ENCODE measurements at regions of chr1 and their contacts with region 1.

Region 1: DNA sequence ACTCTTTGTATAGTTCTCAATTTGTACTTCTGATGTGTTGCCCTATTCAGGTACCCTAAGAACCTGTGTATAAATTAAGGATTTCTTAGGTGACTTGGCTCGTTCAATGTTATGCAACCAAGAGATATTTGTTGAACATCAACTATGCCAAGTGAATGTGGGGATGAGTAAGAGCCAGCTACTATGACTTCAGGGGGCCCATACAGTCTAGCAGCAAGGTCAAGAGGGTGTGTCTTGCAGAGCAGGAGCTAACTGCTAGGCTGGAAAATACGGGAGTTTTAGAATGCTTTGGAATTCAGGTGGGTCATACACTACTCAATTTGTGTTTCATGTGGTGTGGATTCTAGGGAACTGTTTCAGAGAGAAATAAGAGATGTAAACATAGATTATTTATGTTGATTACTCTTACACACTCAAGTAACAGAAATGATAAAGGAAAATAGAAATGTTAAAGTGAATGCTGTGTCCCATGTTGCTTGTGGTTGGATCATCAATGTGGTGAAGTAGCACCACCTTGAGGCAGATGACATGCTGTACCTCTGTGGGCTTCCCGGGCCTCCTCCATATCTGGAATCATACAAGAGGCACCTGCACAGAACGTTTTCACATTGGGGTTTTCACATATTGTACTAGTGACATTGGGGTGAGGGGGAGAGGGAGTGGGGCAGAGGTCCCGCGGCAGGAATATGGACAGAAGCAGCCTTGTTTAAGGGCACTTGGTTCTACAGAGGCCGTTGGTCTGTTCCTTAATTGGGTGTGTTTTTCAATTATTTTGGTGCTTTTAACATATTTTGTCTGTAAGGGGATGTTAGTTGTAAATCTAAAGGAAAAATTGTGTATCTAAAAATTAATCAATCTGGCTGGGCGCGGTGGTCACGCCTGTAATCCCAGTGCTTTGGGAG is 12.4 kb downstream of the ARPC5 start:
- DNase-seq: peak in 1 of 2 experiments; percentile 56
- H3K4me3 ChIP-seq: no peak overlapping the region
- H3K27ac ChIP-seq: no peak overlapping the region
- H3K4me1 ChIP-seq: peaks cover 0 to 4% (median 0%) of the 10 kb centered on the region in 4 experiments; a peak in 1 of 7 replicates
- H3K27me3 ChIP-seq: no peaks in the 10 kb centered on the region
- CTCF ChIP-seq: peak; percentile 69 to 90 (median 83)
- EP300 ChIP-seq: no peak
- POLR2A ChIP-seq: no peak
- RAD21 ChIP-seq: peak; percentile 93

Region 2: DNA sequence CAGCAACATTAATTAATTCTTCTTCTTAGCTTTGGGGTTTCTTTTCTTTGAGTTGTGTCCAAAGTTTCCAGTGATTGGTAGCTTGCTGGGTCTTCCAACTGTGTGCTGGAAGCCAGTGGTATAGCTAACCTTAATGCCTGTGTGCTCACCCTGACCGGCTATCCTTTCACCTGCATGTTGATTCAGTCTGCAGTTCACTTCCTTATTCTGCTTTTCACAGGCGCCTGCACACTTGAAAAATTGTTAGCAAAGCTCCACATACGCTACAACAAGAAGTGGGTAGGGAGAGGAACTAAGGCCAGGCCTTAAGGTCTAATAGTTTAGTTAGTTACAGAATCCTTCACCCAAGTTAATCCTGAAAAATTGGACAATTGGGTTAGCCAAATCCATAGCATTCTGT is 68.6 kb before region 1 on chr1:
- CTCF ChIA-PET with region 1: interaction called, 10 read pairs
- POLR2A ChIA-PET with region 1: no interaction called
- DNase-seq: no peak
- H3K4me3 ChIP-seq: no peak overlapping the region
- H3K27ac ChIP-seq: no peak overlapping the region
- H3K4me1 ChIP-seq: no peaks in the 10 kb centered on the region
- H3K27me3 ChIP-seq: no peaks in the 10 kb centered on the region
- CTCF ChIP-seq: no peak
- EP300 ChIP-seq: no peak
- POLR2A ChIP-seq: no peak
- RAD21 ChIP-seq: no peak

Region 3: GRCh38 chr1:183633633-183634343 is 10.7 kb after region 1 on chr1:
- CTCF ChIA-PET with region 1: interaction called, 19 read pairs
- POLR2A ChIA-PET with region 1: interaction called, 3 read pairs
- DNase-seq: no peak
- H3K4me3 ChIP-seq: peak overlapping the region; percentile 87 to 92 (median 90); a peak in 6 of 8 replicates
- H3K27ac ChIP-seq: no peak overlapping the region
- H3K4me1 ChIP-seq: peaks cover 0 to 10% (median 2%) of the 10 kb centered on the region in 4 experiments; a peak in 3 of 7 replicates
- H3K27me3 ChIP-seq: peaks cover 0 to 7% (median 0%) of the 10 kb centered on the region in 4 experiments; a peak in 3 of 7 replicates
- CTCF ChIP-seq: peak in 2 of 3 experiments; percentile 33 to 40; a peak in 2 of 4 replicates
- EP300 ChIP-seq: no peak
- POLR2A ChIP-seq: no peak
- RAD21 ChIP-seq: no peak

Region 4: GRCh38 chr1:183676586-183677189 is 53.6 kb after region 1 on chr1:
- CTCF ChIA-PET with region 1: no interaction called
- POLR2A ChIA-PET with region 1: no interaction called
- DNase-seq: no peak
- H3K4me3 ChIP-seq: no peak overlapping the region
- H3K27ac ChIP-seq: no peak overlapping the region
- H3K4me1 ChIP-seq: 0 out of 7 replicates have a peak, but pooled peaks cover 0 to 2% (median 0%) of the 10 kb centered on the region in 4 experiments
- H3K27me3 ChIP-seq: no peaks in the 10 kb centered on the region
- CTCF ChIP-seq: no peak
- EP300 ChIP-seq: no peak
- POLR2A ChIP-seq: no peak
- RAD21 ChIP-seq: no peak